Calu3 (cell line): ENCODE measurements at regions of chr12 and their contacts with region 1.

Region 1: GRCh38 chr12:95789126-95790032 is 1.2 kb downstream of the NTN4 start:
- DNase-seq: peak; percentile 80
- H3K4me3 Mint-ChIP-seq: peak overlapping the region; percentile 97
- H3K27ac Mint-ChIP-seq: peak overlapping the region; percentile 87
- H3K4me1 Mint-ChIP-seq: peaks cover 70% of the 10 kb centered on the region
- H3K27me3 Mint-ChIP-seq: no peaks in the 10 kb centered on the region
- CTCF ChIP-seq: no peak

Region 2: GRCh38 chr12:95763809-95764253 is 25.5 kb before region 1 on chr12:
- CTCF ChIA-PET with region 1: no interaction called
- intact Hi-C with region 1: loop called (anchors 2 kb)
- DNase-seq: peak; percentile 60
- H3K4me3 Mint-ChIP-seq: no peak overlapping the region
- H3K27ac Mint-ChIP-seq: peak overlapping the region; percentile 52
- H3K4me1 Mint-ChIP-seq: peaks cover 53% of the 10 kb centered on the region
- H3K27me3 Mint-ChIP-seq: no peaks in the 10 kb centered on the region
- CTCF ChIP-seq: no peak